Heart left ventricle (tissue), 16 donors: ENCODE measurements at regions of chr1 and their contacts with region 1.

Region 1: DNA sequence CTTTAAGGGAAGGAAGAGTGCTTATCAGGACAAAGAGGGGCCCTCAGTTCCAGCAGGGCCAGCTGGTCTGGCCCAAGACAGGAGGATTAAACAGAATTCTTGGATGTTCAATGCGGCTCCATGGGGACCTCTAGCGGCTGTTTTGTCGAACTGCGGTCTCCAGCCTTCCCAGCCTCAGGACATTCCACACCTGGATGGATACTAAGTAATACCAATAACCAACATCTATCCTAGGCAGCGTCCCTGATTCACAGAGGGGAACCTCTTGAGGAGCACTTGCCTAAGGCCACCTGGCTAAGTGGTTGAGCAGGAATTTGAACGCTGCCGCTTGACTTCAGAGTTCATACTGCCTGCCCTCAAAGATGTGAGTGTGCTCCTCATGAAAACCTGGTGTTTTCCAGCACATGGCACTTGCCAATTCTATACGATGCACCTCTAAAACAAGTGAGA is 15.5 kb upstream of the CD247 start:
- DNase-seq: peak in 4 of 5 donors; percentile 40 to 58 (median 58)
- ATAC-seq: peak; percentile 61 to 89 (median 88)
- H3K4me3 ChIP-seq: no peak overlapping the region
- H3K27ac ChIP-seq: peak overlapping the region in 2 of 12 donors; percentile 11 to 20
- H3K4me1 ChIP-seq: peaks cover 0 to 8% (median under 1%) of the 10 kb centered on the region in 12 donors
- H3K27me3 ChIP-seq: no peaks in the 10 kb centered on the region
- CTCF ChIP-seq: peak; percentile 79 to 95 (median 90)
- POLR2A ChIP-seq: no peak

Region 2: DNA sequence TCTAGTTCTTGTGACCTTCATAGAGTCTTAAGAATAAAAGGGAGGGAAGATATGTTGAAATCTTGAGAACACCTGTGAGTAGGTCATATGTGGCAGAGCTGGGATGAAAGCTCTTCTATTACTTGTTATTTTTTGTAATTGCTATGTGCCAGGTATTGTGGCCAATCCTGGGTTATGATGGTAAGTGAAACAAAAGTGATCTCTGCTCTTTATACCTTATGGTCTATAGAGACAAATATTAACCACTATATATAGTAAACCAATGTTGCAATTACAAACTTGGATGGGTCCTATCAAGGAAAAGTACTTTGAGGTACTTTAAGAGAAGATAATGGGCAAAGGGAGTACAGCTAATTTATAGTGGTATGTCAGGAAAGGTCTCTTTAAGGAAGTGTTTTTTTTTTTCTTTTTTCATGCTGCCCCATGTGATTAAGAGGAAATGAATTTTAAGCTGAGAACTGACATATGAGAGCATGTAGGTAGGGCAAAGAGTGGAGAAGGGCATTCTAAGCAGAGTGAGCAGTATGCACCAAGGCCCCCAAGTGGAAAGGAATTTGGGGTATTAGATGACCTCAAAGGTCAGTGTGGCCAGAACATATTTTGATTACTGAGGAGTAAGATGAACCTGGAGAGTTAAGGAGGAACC is 269.9 kb before region 1 on chr1:
- intact Hi-C with region 1: loop called in 8 of 10 experiments (anchors 2 to 10 kb)
- DNase-seq: no peak
- ATAC-seq: peak in 2 of 4 donors; percentile 11 to 34
- H3K4me3 ChIP-seq: no peak overlapping the region
- H3K27ac ChIP-seq: peak overlapping the region in 1 of 12 donors; percentile 42
- H3K4me1 ChIP-seq: peaks cover 0 to 66% (median 41%) of the 10 kb centered on the region in 12 donors
- H3K27me3 ChIP-seq: no peaks in the 10 kb centered on the region
- CTCF ChIP-seq: no peak
- POLR2A ChIP-seq: no peak

Region 3: DNA sequence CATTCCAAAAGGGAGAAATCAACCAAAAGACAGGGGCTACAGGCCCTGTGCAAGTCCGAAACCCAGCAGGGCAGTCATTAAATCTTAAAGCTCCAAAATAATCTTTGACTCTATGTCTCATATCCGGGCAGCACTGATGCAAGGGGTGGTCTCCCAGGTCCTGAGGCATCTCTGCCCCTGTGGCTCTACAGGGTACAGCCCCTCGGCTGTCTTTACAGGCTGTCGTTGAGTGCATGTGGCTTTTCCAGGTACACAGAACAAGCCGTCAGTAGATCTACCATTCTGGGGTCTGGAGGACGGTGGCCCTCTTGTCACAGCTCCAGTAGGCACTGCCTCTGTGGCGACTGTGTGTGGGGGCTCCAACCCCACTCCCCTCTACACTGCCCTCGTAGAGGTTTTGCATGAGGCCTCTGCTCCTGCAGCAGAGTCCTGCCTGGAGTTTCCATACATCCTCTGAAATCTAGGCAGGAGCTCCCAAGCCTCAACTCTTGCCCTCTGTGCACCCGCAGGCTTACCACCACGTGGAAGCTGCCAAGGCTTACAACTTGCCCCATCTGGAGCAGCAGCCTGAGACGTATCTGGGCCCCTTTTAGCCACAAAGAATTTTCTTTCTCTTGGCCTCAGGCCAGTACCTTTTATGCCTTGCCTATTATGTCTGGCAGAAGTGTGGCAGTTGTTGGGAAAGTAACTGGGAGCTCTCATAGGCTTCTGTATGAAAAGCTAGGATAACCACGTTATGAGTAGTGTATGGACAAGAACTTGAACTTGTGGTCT is 260.7 kb before region 1 on chr1:
- intact Hi-C with region 1: loop called in 9 of 10 experiments (anchors 5 to 10 kb)
- DNase-seq: no peak
- ATAC-seq: peak; percentile 37 to 69 (median 64)
- H3K4me3 ChIP-seq: no peak overlapping the region
- H3K27ac ChIP-seq: no peak overlapping the region
- H3K4me1 ChIP-seq: peaks cover 0 to 40% (median 20%) of the 10 kb centered on the region in 12 donors
- H3K27me3 ChIP-seq: no peaks in the 10 kb centered on the region
- CTCF ChIP-seq: no peak
- POLR2A ChIP-seq: no peak

Region 4: GRCh38 chr1:167427848-167428247 is 106.0 kb before region 1 on chr1:
- intact Hi-C with region 1: no loop called
- DNase-seq: no peak
- ATAC-seq: no peak
- H3K4me3 ChIP-seq: no peak overlapping the region
- H3K27ac ChIP-seq: peak overlapping the region in 1 of 12 donors; percentile 12
- H3K4me1 ChIP-seq: peaks cover 0 to 21% (median 3%) of the 10 kb centered on the region in 12 donors
- H3K27me3 ChIP-seq: no peaks in the 10 kb centered on the region
- CTCF ChIP-seq: no peak
- POLR2A ChIP-seq: no peak

Region 5: GRCh38 chr1:167442124-167442848 is 91.6 kb before region 1 on chr1:
- intact Hi-C with region 1: loop called in 6 of 10 experiments (anchors 5 to 10 kb)
- DNase-seq: peak; percentile 79 to 91 (median 87)
- ATAC-seq: peak; percentile 86 to 96 (median 94)
- H3K4me3 ChIP-seq: no peak overlapping the region
- H3K27ac ChIP-seq: no peak overlapping the region
- H3K4me1 ChIP-seq: peaks cover 0 to 17% (median 9%) of the 10 kb centered on the region in 12 donors
- H3K27me3 ChIP-seq: peaks cover 0 to 18% (median 10%) of the 10 kb centered on the region in 9 donors
- CTCF ChIP-seq: peak; percentile 79 to 94 (median 88)
- POLR2A ChIP-seq: no peak

Region 6: DNA sequence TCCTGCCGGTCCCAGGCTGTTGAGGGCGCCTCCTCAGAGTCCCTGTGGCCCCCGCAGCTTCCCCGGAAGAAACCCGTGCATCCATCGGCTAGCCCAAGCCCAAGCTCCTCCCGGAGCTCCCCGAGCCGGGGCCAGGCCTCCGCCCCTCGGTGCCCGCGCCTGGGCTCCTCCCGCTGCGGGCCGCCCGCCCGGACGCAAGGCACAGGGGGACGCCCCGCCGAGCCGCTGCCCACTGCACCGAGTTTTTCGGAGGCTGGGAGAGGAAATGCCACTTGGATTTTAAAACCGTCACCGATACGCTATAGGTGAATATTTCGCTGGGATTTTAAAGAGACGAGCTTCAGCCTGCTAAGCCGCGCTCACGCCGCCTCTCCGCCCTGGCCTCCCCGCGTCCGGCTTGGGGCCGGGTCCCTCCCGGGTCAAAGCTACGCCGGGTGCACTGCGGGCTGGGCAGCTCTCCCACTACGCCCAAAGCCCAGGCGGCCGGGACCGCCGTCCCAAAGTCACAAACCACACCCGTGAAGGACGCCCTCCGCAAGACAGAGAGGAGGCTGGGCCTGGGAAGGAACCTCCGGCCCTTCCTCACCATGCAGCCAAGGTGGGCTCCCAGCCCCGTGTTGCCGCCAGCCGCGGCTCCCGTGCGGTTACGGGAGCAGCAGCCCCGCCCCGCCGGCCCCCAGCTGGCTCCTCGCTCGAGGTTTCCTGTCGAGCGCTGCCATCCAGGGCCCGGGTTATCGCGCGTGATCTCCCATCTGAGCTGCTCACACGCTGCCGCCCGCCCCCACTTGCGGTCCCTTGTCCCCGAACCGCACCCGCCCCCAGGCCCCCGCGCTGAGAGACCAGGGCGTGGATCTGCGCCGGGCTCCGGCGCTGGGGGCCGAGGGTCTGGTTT is 78.7 kb before region 1 on chr1:
- intact Hi-C with region 1: loop called in 6 of 10 experiments (anchors 5 to 10 kb)
- DNase-seq: peak; percentile 53 to 83 (median 63)
- ATAC-seq: peak; percentile 24 to 87 (median 84)
- H3K4me3 ChIP-seq: peak overlapping the region; percentile 40 to 93 (median 78)
- H3K27ac ChIP-seq: peak overlapping the region; percentile 66 to 94 (median 86)
- H3K4me1 ChIP-seq: peaks cover 0 to 26% (median 5%) of the 10 kb centered on the region in 12 donors
- H3K27me3 ChIP-seq: no peaks in the 10 kb centered on the region
- CTCF ChIP-seq: no peak
- POLR2A ChIP-seq: peak in 1 of 2 donors; percentile 6